ENCODE measurements at regions of chr5 and their contacts with region 1.

Region 1: GRCh38 chr5:75717082-75717922 is at the start of gene POC5:
- DNase-seq: peak; percentile 96
- ATAC-seq: peak; percentile 92
- H3K4me3 Mint-ChIP-seq: peak within 1 kb of the TSS; percentile 98
- H3K27ac Mint-ChIP-seq: peak within 1 kb of the TSS; percentile 98
- H3K4me1 Mint-ChIP-seq: peaks cover 32% of the 10 kb centered on the region
- H3K27me3 Mint-ChIP-seq: peaks cover 2% of the 10 kb centered on the region
- CTCF ChIP-seq: no peak
- total RNA-seq, gene POC5: 27.6 and 29.8 TPM in 2 replicates

Region 2: GRCh38 chr5:75336625-75337339 is 380.5 kb before region 1 on chr5 and contains the start of gene HMGCR:
- CTCF ChIA-PET with region 1: no interaction called
- POLR2A ChIA-PET with region 1: interaction called, 28 read pairs
- intact Hi-C with region 1: loop called (anchors 1 kb)
- DNase-seq: peak; percentile 89
- ATAC-seq: peak; percentile 95
- H3K4me3 Mint-ChIP-seq: no peak within 1 kb of the TSS
- H3K27ac Mint-ChIP-seq: no peak within 1 kb of the TSS
- H3K4me1 Mint-ChIP-seq: peaks cover 30% of the 10 kb centered on the region
- H3K27me3 Mint-ChIP-seq: no peaks in the 10 kb centered on the region
- CTCF ChIP-seq: no peak
- total RNA-seq, gene HMGCR: 105 and 131 TPM in 2 replicates

Region 3: DNA sequence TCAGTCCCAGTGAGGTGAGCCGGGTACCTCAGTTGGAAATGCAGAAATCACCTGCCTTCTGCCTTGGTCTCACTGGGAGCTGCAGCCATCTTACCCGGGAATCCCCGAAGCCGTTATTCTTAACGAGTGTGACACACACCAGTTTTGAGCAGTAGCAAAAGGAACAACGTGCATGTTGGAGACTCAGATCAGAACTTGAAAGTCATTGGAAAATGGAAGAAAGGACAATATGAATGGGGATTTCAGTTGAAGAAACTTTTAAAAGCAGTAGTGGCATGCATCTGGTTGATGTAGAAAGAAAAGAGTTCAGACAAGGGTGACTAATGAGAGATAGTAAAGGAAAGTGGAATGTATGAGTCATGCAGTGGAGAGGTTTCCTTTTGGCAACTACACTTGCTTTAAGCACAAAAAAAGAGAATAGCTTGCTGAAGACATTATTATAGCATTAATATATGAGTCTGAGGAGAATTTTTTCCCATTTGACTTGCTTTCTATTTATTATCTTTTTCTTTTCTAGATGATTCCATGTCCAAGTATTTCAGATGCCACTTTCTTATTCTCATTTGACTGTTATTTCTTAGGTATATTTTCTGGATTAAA is 150.5 kb before region 1 on chr5:
- CTCF ChIA-PET with region 1: no interaction called
- POLR2A ChIA-PET with region 1: interaction called, 3 read pairs
- intact Hi-C with region 1: loop called (anchors 2 kb)
- DNase-seq: no peak
- ATAC-seq: peak; percentile 83
- H3K4me3 Mint-ChIP-seq: peak overlapping the region; percentile 76
- H3K27ac Mint-ChIP-seq: peak overlapping the region; percentile 88
- H3K4me1 Mint-ChIP-seq: peaks cover 46% of the 10 kb centered on the region
- H3K27me3 Mint-ChIP-seq: no peaks in the 10 kb centered on the region
- CTCF ChIP-seq: no peak

Region 4: GRCh38 chr5:75837258-75837841 is 120.0 kb after region 1 on chr5:
- CTCF ChIA-PET with region 1: no interaction called
- POLR2A ChIA-PET with region 1: no interaction called
- intact Hi-C with region 1: no loop called
- DNase-seq: no peak
- ATAC-seq: peak; percentile 52
- H3K4me3 Mint-ChIP-seq: peak overlapping the region; percentile 37
- H3K27ac Mint-ChIP-seq: no peak overlapping the region
- H3K4me1 Mint-ChIP-seq: peaks cover 15% of the 10 kb centered on the region
- H3K27me3 Mint-ChIP-seq: no peaks in the 10 kb centered on the region
- CTCF ChIP-seq: no peak

Region 5: GRCh38 chr5:75847561-75848021 is 130.3 kb after region 1 on chr5:
- CTCF ChIA-PET with region 1: no interaction called
- POLR2A ChIA-PET with region 1: interaction called, 6 read pairs
- intact Hi-C with region 1: loop called (anchors 1 kb)
- DNase-seq: no peak
- ATAC-seq: peak; percentile 89
- H3K4me3 Mint-ChIP-seq: peak overlapping the region; percentile 50
- H3K27ac Mint-ChIP-seq: peak overlapping the region; percentile 82
- H3K4me1 Mint-ChIP-seq: peaks cover 45% of the 10 kb centered on the region
- H3K27me3 Mint-ChIP-seq: no peaks in the 10 kb centered on the region
- CTCF ChIP-seq: no peak

Region 6: GRCh38 chr5:76351577-76351976 is 634.3 kb after region 1 on chr5:
- CTCF ChIA-PET with region 1: no interaction called
- POLR2A ChIA-PET with region 1: no interaction called
- intact Hi-C with region 1: loop called (anchors 5 kb)
- DNase-seq: peak; percentile 16
- ATAC-seq: peak; percentile 98
- H3K4me3 Mint-ChIP-seq: peak overlapping the region; percentile 35
- H3K27ac Mint-ChIP-seq: peak overlapping the region; percentile 66
- H3K4me1 Mint-ChIP-seq: peaks cover 24% of the 10 kb centered on the region
- H3K27me3 Mint-ChIP-seq: peaks cover 3% of the 10 kb centered on the region
- CTCF ChIP-seq: no peak

Measured in activated B cell treated with CpG ODN at 0.5 μM for 24 hours (primary cell).